ENCODE measurements at regions of chr12 and their contacts with region 1.

Region 1: DNA sequence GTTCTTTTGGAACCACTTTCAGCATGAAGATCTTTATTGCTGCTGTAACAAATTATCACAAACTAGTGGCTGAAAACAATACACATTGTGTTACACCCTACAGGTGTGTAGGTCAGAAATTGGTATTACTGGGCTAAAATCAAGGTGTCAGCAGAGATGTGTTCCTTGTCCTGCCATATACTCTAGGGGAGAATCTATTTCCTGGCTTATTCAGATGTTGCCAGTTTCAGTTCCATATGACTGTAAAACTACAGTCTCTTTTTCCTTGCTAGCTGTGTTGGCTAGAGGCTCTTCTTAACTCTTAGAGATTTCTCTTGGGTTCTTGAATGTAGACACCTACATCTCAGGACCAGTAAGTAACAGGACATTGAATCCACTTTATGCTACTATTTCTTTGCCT is 215.6 kb upstream of the PPFIA2 start:
- DNase-seq: no peak
- H3K4me3 ChIP-seq: no peak overlapping the region
- H3K27ac ChIP-seq: no peak overlapping the region
- H3K4me1 ChIP-seq: no peaks in the 10 kb centered on the region
- H3K27me3 ChIP-seq: no peaks in the 10 kb centered on the region
- CTCF ChIP-seq: no peak
- POLR2A ChIP-seq: no peak

Region 2: DNA sequence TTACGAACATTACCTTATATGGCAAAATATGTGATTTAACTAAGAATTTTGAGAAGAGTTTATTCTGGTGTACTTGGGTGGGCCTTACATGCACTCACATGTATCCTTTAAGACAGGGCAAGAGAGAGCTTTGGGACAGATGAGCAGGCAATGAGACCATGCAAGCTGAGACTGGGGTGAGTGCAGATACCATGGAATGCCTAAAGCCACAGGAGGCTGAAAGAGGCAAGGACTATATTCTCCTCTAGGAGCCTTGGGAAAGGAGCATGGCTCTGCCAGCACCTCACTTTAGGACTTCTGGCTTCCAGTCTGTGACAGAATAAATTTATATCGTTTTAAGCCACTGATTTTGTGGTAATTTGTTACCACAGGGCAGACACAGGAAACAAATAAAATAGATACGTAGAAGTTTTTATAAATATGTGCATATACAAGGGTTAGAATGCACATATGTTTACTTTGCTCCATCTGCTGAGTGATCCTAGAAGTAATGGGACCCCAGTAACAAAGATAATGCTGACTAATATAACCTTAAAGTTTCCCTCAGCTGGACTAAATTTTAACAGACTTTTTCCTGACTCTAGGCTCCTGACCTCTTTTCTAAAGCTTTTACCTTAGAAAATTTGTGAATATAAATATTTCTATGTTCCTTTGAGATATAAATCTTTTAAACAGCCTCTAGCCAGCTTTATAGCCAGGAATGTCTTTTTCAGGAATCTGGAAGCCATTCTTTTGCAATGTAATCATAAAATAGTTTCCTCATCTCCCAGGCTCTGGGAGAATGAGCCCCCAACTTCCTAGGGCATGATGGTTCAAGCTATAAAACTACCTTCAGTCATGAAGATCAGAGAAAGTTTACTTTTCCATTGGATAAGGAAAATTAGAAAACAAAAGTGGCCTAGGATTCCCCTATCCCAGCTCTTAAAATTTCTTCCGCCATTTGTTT is 432.4 kb before region 1 on chr12:
- intact Hi-C with region 1: loop called (anchors 5 kb)
- DNase-seq: no peak
- H3K4me3 ChIP-seq: no peak overlapping the region
- H3K27ac ChIP-seq: no peak overlapping the region
- H3K4me1 ChIP-seq: no peaks in the 10 kb centered on the region
- H3K27me3 ChIP-seq: no peaks in the 10 kb centered on the region
- CTCF ChIP-seq: no peak
- POLR2A ChIP-seq: no peak

Region 3: DNA sequence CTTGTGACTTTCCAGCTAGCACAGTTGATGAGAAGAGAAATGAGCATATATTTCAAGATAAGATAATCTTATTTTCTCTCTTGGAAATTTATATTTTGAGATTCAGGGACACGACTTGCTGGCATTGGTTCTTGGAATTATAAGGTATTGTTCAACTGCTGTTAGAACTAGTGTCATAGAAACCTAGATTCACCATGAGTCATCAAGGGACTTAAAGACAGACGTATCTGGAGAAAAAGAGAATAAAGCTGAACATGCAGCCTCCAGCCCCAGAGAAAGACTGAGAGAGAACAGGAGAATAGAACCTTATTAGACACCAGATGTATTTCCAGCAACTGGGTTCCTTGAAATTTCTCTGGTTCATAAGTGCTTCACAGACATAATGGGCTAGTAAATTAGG is 21.2 kb before region 1 on chr12:
- intact Hi-C with region 1: no loop called
- DNase-seq: no peak
- H3K4me3 ChIP-seq: no peak overlapping the region
- H3K27ac ChIP-seq: no peak overlapping the region
- H3K4me1 ChIP-seq: no peaks in the 10 kb centered on the region
- H3K27me3 ChIP-seq: no peaks in the 10 kb centered on the region
- CTCF ChIP-seq: no peak
- POLR2A ChIP-seq: no peak

Measured in breast epithelium (tissue), 4 donors.